AG04450 (cell line): ENCODE measurements at regions of chr21 and their contacts with region 1.

Region 1: GRCh38 chr21:15592271-15592860 is 137.4 kb upstream of the USP25 start:
- DNase-seq: peak; percentile 21
- H3K4me3 ChIP-seq: no peak overlapping the region
- H3K27ac ChIP-seq: no peak overlapping the region
- H3K27me3 ChIP-seq: no peaks in the 10 kb centered on the region
- CTCF ChIP-seq: peak; percentile 61

Region 2: GRCh38 chr21:14403681-14404318 is 1188.6 kb before region 1 on chr21:
- CTCF ChIA-PET with region 1: interaction called, 17 read pairs
- POLR2A ChIA-PET with region 1: no interaction called
- DNase-seq: no peak
- H3K4me3 ChIP-seq: no peak overlapping the region
- H3K27ac ChIP-seq: no peak overlapping the region
- H3K27me3 ChIP-seq: no peaks in the 10 kb centered on the region
- CTCF ChIP-seq: peak; percentile 66

Region 3: DNA sequence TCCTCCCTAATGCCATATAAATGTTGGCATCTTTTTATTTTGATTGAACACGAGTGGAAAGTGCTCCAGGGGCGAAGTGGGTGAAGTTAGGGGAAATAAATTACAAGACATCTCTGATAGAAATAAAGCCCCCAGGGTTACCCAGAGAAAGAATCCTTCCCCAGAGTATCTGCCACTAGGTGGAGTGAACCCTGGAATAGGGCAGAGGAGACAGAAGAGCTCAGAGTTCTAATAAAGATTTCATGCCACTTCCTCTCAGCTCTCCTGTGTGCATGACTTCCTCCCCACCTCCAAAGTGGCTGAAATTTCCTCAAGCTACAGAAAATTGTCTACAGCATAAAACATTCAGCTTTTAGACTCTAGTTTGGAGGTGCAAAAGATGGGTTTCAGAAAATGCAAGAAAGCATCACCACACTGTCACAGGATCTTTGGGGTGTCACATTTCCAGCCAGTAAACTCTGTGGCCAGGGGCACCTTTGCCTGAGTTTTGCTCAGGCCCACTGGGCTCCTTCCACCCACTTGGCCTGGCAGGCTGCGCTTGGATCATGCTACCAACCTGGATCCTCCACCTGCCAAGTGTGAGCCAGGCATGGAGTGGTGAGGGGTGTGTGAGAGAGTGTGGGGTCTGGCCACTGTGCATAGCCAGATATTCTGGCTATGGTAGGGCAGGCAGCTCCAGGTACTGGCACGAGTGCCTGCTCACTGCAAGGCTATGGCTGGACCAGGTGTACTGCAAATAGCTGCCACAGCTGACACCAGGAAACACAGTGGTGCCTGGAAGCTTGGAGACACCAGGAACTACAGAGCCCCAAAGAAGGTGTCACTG is 71.3 kb before region 1 on chr21:
- CTCF ChIA-PET with region 1: interaction called, 12 read pairs
- POLR2A ChIA-PET with region 1: no interaction called
- DNase-seq: no peak
- H3K4me3 ChIP-seq: no peak overlapping the region
- H3K27ac ChIP-seq: no peak overlapping the region
- H3K27me3 ChIP-seq: no peaks in the 10 kb centered on the region
- CTCF ChIP-seq: peak; percentile 47

Region 4: GRCh38 chr21:15624636-15625035 is 32.3 kb after region 1 on chr21:
- CTCF ChIA-PET with region 1: no interaction called
- POLR2A ChIA-PET with region 1: no interaction called
- DNase-seq: no peak
- H3K4me3 ChIP-seq: no peak overlapping the region
- H3K27ac ChIP-seq: no peak overlapping the region
- H3K27me3 ChIP-seq: no peaks in the 10 kb centered on the region
- CTCF ChIP-seq: no peak